Activated CD8-positive, alpha-beta T cell treated with anti-CD3 and anti-CD28 coated beads for 36 hours (primary cell): ENCODE measurements at regions of chr18 and their contacts with region 1.

Region 1: GRCh38 chr18:13558124-13558523 is 168.2 kb downstream of the FAM210A start:
- DNase-seq: peak; percentile 57
- ATAC-seq: peak; percentile 48
- H3K4me3 Mint-ChIP-seq: no peak overlapping the region
- H3K27ac Mint-ChIP-seq: peak overlapping the region; percentile 4
- H3K4me1 Mint-ChIP-seq: peaks cover 43% of the 10 kb centered on the region
- H3K27me3 Mint-ChIP-seq: no peaks in the 10 kb centered on the region
- CTCF ChIP-seq: peak; percentile 82

Region 2: DNA sequence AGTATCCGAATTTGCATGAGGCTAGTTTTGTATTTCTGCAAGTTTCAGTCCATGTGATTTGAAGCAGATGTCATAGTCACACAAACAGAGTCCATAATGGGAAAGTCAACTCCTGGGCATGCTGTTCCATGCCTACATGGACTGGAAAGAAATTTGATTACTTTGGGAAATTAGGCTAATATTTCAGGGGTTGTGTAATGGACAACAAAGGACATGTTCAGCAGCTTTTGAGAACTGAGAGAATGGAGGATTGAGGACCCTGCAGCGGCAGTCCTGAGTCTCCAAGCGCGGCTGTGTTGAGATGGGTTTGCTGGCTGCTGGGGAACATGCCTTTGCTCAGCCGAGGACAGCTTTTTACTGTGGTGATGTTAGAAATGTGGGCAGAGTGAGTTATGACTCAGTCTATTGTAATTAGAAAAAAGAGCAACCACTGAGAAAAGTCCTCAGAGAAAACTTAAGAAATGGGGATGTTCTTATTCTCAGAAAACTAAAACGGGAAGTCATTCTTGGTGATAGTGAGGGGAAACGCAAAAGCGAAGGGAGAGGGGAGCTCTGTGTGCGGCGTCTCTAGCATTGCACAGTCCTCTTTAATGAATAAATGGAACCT is 19.1 kb after region 1 on chr18:
- CTCF ChIA-PET with region 1: interaction called, 14 read pairs
- POLR2A ChIA-PET with region 1: interaction called, 6 read pairs
- intact Hi-C with region 1: loop called (anchors 2 kb)
- DNase-seq: peak; percentile 75
- ATAC-seq: peak; percentile 83
- H3K4me3 Mint-ChIP-seq: peak overlapping the region; percentile 56
- H3K27ac Mint-ChIP-seq: peak overlapping the region; percentile 88
- H3K4me1 Mint-ChIP-seq: peaks cover 59% of the 10 kb centered on the region
- H3K27me3 Mint-ChIP-seq: no peaks in the 10 kb centered on the region
- CTCF ChIP-seq: no peak

Region 3: DNA sequence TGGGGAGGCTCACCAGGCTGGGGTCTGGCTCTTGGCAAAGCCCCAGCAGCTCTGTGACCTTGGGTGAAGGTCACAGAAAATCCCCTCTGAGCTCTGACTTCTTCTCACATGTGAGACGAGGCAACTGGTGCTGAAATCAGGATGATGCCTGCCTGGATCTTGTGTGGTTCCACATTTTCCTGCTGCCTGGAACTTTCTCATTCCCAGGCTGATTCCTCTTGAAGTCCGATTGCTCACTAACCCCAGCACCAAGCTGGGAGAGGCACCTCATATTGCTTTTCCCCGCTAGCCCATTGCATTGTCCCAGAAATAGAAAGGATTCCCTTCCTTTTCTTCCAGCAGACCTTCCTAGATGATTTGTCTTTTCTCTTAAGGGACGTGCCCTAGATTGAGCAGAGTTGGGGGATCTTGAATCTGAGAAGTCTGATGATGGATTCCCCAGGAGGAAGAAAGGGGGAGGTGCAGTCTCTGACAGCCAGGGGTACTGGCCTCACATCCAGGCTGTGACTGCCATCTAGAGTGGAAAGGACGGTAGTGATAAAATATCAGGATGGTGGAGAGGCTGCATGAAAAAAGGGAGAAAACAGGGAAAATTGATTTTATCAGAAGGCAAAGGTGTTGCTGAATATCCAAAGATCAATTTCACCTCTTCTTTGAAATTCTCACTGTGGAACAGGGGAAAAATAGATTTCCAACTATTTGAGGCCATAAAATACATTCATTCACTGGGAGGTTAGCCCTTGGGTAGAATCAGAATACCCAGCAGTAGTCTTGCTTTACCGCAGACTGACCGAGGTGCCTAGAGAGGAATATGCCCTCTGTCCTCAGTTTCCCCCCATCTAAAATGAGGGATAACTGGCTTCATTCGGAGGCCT is 72.0 kb after region 1 on chr18:
- CTCF ChIA-PET with region 1: interaction called, 81 read pairs
- POLR2A ChIA-PET with region 1: interaction called, 5 read pairs
- intact Hi-C with region 1: loop called (anchors 1 kb)
- DNase-seq: peak; percentile 74
- ATAC-seq: peak; percentile 95
- H3K4me3 Mint-ChIP-seq: no peak overlapping the region
- H3K27ac Mint-ChIP-seq: peak overlapping the region; percentile 70
- H3K4me1 Mint-ChIP-seq: peaks cover 28% of the 10 kb centered on the region
- H3K27me3 Mint-ChIP-seq: no peaks in the 10 kb centered on the region
- CTCF ChIP-seq: peak; percentile 90

Region 4: DNA sequence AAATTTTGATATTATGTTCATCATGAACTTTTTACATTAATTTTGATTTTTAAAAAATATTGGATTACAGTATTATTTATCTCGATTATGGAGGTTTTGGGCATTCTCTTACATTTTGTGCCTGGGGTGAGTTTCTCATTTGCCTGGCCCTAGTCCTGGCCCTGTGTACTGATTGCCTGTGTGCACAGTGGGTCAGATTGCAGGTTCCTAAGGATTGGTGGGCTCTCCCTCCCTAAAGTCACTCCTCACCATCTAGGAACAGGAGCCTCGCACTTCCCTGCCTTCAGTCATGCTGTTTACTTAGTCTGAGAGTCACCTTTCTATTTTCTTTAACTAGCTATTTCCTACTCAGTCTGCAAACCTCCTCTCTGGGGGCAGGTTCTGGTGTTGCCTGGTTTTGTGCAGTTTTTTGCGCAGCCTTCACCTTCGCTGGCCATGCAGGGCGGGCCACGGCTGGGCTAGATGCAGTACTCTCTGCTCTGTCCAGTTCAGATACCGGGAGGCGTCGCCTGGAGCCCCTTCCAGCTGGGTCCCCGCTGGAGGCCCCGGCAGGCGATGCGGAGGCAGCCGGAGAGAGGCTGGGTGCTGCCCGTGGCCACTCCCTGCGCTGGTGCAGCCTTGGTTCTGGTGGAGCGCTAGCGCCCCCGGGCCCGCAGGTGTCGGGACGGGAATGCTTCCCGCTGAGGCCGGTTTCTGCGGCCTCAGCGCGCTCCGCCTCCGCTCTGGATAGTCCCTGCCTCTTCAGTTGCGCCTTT is 242.6 kb after region 1 on chr18:
- CTCF ChIA-PET with region 1: interaction called, 3 read pairs
- POLR2A ChIA-PET with region 1: no interaction called
- intact Hi-C with region 1: loop called (anchors 10 kb)
- DNase-seq: peak; percentile 68
- ATAC-seq: peak; percentile 96
- H3K4me3 Mint-ChIP-seq: peak overlapping the region; percentile 15
- H3K27ac Mint-ChIP-seq: no peak overlapping the region
- H3K4me1 Mint-ChIP-seq: peaks cover 5% of the 10 kb centered on the region
- H3K27me3 Mint-ChIP-seq: peaks cover 41% of the 10 kb centered on the region
- CTCF ChIP-seq: peak; percentile 14